CD4-positive, alpha-beta memory T cell (primary cell): ENCODE measurements at regions of chr4 and their contacts with region 1.

Region 1: GRCh38 chr4:99949034-99949998 is 759 bp downstream of the H2AZ1 start:
- DNase-seq: peak; percentile 87 to 94 (median 88)
- H3K4me3 ChIP-seq: peak overlapping the region; percentile 90 to 98
- H3K4me3 Mint-ChIP-seq: no peak overlapping the region
- H3K27ac ChIP-seq: peak overlapping the region; percentile 86
- H3K27ac Mint-ChIP-seq: no peak overlapping the region
- H3K4me1 ChIP-seq: peaks cover 53% of the 10 kb centered on the region
- H3K4me1 Mint-ChIP-seq: peaks cover 24 to 33% (median 32%) of the 10 kb centered on the region in 4 donors
- H3K27me3 ChIP-seq: no peaks in the 10 kb centered on the region
- H3K27me3 Mint-ChIP-seq: no peaks in the 10 kb centered on the region

Region 2: DNA sequence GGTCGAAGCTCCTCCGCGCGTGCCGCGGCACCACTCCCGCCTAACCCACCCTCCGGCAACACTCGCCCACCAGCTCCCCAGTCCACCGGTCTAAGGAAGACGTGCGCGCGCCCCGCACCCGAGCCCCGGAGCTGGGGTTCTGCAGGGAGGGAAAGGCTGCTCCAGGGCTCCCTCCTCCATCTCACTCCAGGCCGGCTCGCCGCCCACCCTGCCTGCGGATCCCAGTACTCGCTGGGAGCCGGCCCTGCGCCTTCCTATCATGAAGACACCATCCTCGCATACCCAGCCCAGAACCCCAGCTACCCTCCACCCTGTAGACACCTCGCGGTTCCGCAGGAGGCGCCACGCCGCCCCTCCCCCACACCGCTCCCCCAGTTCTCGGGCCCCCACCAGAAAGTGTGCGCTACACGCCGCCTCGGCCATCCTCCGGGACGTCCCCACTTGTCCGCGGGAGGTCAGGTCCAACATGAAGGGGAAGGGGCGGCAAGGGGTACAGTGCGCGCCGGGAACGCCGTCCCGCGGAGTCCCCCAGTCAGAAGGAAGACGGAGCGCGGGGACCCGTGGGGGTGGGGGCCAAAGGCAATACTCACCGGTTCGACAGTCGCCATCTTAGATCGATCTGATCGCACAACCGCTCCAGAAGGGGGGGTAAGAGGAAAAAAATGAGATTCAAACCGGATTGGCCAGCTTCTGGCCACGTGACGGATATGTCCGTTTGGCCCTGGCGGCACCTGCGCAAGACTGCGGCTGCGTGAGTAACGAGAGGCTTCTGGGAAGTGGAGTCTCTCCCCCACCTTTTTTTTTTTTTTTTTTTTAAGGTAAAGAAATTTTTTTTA is 1020.6 kb before region 1 on chr4 and contains the start of gene EIF4E:
- CTCF ChIA-PET with region 1: interaction called, 4 read pairs
- POLR2A ChIA-PET with region 1: interaction called, 3 read pairs
- intact Hi-C with region 1: loop called (anchors 1 kb)
- DNase-seq: peak; percentile 97 to 99 (median 98)
- H3K4me3 ChIP-seq: peak within 1 kb of the TSS; percentile 66 to 97
- H3K4me3 Mint-ChIP-seq: peak within 1 kb of the TSS; percentile 92 to 100 (median 98)
- H3K27ac ChIP-seq: peak within 1 kb of the TSS; percentile 82
- H3K27ac Mint-ChIP-seq: peak within 1 kb of the TSS; percentile 94 to 99 (median 98)
- H3K4me1 ChIP-seq: peaks cover 33% of the 10 kb centered on the region
- H3K4me1 Mint-ChIP-seq: peaks cover 17 to 58% (median 30%) of the 10 kb centered on the region in 4 donors
- H3K27me3 ChIP-seq: no peaks in the 10 kb centered on the region
- H3K27me3 Mint-ChIP-seq: peaks cover 0 to 2% of the 10 kb centered on the region in 2 donors
- total RNA-seq, gene EIF4E: 58.2 to 62.5 TPM

Region 3: GRCh38 chr4:99715286-99715685 is 234.0 kb before region 1 on chr4:
- CTCF ChIA-PET with region 1: no interaction called
- POLR2A ChIA-PET with region 1: no interaction called
- intact Hi-C with region 1: no loop called
- DNase-seq: no peak
- H3K4me3 ChIP-seq: no peak overlapping the region
- H3K4me3 Mint-ChIP-seq: no peak overlapping the region
- H3K27ac ChIP-seq: no peak overlapping the region
- H3K27ac Mint-ChIP-seq: no peak overlapping the region
- H3K4me1 ChIP-seq: no peaks in the 10 kb centered on the region
- H3K4me1 Mint-ChIP-seq: no peaks in the 10 kb centered on the region
- H3K27me3 ChIP-seq: no peaks in the 10 kb centered on the region
- H3K27me3 Mint-ChIP-seq: peaks cover 4 to 11% of the 10 kb centered on the region in 2 donors

Region 4: DNA sequence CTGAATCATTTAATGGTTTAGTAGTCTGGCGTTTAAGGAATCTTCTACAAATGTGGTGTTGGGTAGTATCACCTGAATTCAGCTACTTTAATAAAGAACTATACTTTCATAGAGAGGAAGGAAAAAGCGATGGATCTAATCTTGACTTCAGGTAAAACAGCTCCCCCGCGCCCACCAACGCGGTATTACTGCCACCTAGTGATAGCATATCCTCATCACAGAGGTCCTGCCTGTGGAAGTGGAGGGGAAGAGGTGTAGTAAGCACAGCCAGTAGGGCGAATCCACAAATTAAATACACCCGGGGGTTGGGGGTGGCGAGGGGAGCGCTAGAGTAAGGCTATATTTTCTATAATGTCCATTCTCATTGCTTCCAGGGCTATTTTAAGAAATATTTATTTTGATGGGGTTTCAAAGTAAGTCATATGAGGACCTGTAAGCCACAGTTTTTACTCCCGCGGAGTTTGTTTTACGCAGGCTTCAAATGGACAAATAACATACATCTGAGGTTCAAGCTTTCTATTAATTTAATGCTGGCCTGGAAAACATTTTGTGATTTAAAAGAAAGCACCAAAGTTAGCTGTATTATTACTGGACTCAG is 141.0 kb before region 1 on chr4:
- CTCF ChIA-PET with region 1: interaction called, 50 read pairs
- POLR2A ChIA-PET with region 1: interaction called, 20 read pairs
- intact Hi-C with region 1: loop called (anchors 1 kb)
- DNase-seq: peak; percentile 69 to 76 (median 70)
- H3K4me3 ChIP-seq: no peak overlapping the region
- H3K4me3 Mint-ChIP-seq: peak overlapping the region in 1 of 8 donors; percentile 62
- H3K27ac ChIP-seq: no peak overlapping the region
- H3K27ac Mint-ChIP-seq: no peak overlapping the region
- H3K4me1 ChIP-seq: no peaks in the 10 kb centered on the region
- H3K4me1 Mint-ChIP-seq: peaks cover 5 to 6% (median 5%) of the 10 kb centered on the region in 4 donors
- H3K27me3 ChIP-seq: no peaks in the 10 kb centered on the region
- H3K27me3 Mint-ChIP-seq: peaks cover 4 to 5% of the 10 kb centered on the region in 2 donors

Region 5: GRCh38 chr4:99885063-99885664 is 64.2 kb before region 1 on chr4:
- CTCF ChIA-PET with region 1: interaction called, 21 read pairs
- POLR2A ChIA-PET with region 1: interaction called, 5 read pairs
- intact Hi-C with region 1: no loop called
- DNase-seq: peak; percentile 47 to 61 (median 53)
- H3K4me3 ChIP-seq: no peak overlapping the region
- H3K4me3 Mint-ChIP-seq: no peak overlapping the region
- H3K27ac ChIP-seq: no peak overlapping the region
- H3K27ac Mint-ChIP-seq: no peak overlapping the region
- H3K4me1 ChIP-seq: no peaks in the 10 kb centered on the region
- H3K4me1 Mint-ChIP-seq: peaks cover 6 to 11% (median 6%) of the 10 kb centered on the region in 4 donors
- H3K27me3 ChIP-seq: no peaks in the 10 kb centered on the region
- H3K27me3 Mint-ChIP-seq: no peaks in the 10 kb centered on the region

Region 6: DNA sequence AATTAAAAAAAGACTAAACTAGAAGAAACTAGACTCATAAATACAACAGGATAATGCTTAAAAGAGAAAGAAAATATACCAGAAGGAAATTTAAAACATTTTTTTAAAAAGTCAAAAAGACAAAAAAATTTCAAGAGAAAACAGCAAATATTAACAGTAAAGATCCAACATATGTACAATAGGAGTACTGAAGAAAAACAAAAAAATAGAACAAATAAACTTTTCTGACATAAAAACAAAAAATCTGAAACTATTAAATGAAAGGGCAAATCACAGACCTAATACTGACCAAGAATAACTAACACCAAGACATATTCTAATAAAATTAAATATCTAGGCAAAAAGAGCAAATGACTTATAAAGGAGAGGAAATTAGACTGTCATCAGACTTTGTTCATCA is 14.4 kb before region 1 on chr4:
- CTCF ChIA-PET with region 1: interaction called, 5 read pairs
- POLR2A ChIA-PET with region 1: interaction called, 15 read pairs
- intact Hi-C with region 1: loop called (anchors 2 kb)
- DNase-seq: no peak
- H3K4me3 ChIP-seq: no peak overlapping the region
- H3K4me3 Mint-ChIP-seq: peak overlapping the region in 2 of 8 donors; percentile 5 to 48
- H3K27ac ChIP-seq: no peak overlapping the region
- H3K27ac Mint-ChIP-seq: peak overlapping the region in 2 of 7 donors; percentile 21 to 65
- H3K4me1 ChIP-seq: peaks cover 30% of the 10 kb centered on the region
- H3K4me1 Mint-ChIP-seq: peaks cover 29 to 61% (median 46%) of the 10 kb centered on the region in 4 donors
- H3K27me3 ChIP-seq: no peaks in the 10 kb centered on the region
- H3K27me3 Mint-ChIP-seq: no peaks in the 10 kb centered on the region

Region 7: DNA sequence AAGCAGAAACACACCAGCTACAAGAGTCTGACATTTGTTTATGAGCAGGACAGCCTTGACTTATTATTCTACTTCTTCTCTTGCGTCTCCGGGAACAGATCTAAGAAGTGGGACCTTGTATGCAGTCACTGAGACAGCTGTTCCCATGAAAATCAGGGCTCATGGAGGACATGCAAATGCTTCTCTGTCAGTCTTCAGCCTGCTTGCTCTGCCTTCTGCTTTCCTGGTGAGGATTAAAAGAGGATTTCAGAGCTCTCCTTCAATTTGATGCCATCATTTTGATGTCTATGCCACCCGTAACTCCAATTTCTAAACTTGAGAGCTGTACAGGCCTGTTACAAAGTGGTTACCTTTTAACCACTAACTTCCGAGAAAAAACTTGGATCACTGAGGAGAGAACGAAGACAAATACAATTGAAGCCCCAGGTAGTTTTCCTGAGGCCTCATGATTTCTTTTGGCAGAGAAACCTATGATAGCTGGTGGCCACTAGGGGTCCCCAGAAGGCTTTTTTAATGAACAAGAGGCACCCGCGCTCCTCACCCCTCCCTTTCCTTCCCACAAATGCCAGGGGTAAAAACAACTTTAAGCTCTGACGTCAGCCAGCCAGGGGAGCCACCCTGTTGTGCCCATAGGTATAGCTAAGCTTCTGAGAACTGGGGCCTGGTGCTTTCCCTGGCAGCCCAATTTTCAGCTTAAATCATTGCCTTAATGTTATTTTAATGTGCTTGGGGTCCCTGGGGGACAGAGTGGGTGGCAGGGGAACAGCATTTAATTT is 144.0 kb after region 1 on chr4:
- CTCF ChIA-PET with region 1: interaction called, 6 read pairs
- POLR2A ChIA-PET with region 1: interaction called, 5 read pairs
- intact Hi-C with region 1: loop called (anchors 2 kb)
- DNase-seq: peak; percentile 87 to 97 (median 91)
- H3K4me3 ChIP-seq: no peak overlapping the region
- H3K4me3 Mint-ChIP-seq: peak overlapping the region in 4 of 8 donors; percentile 12 to 61 (median 36)
- H3K27ac ChIP-seq: no peak overlapping the region
- H3K27ac Mint-ChIP-seq: peak overlapping the region; percentile 78 to 96 (median 96)
- H3K4me1 ChIP-seq: peaks cover 13% of the 10 kb centered on the region
- H3K4me1 Mint-ChIP-seq: peaks cover 9 to 28% (median 15%) of the 10 kb centered on the region in 4 donors
- H3K27me3 ChIP-seq: no peaks in the 10 kb centered on the region
- H3K27me3 Mint-ChIP-seq: no peaks in the 10 kb centered on the region